Dendritic cell treated with granulocyte-macrophage colony-stimulating factor and Interleukin-4, amounts not matched to agents 40 ng/mL and 50 ng/mL, for 4 days (primary cell): ENCODE measurements at regions of chr17 and their contacts with region 1.

Region 1: GRCh38 chr17:4696437-4696805 is 7.5 kb downstream of the PELP1 start:
- H3K4me3 Mint-ChIP-seq: no peak overlapping the region
- H3K27ac Mint-ChIP-seq: peak overlapping the region; percentile 87
- H3K4me1 Mint-ChIP-seq: peaks cover 42% of the 10 kb centered on the region
- H3K27me3 Mint-ChIP-seq: no peaks in the 10 kb centered on the region

Region 2: GRCh38 chr17:4420692-4421131 is 275.7 kb before region 1 on chr17:
- intact Hi-C with region 1: loop called (anchors 5 kb)
- H3K4me3 Mint-ChIP-seq: no peak overlapping the region
- H3K27ac Mint-ChIP-seq: no peak overlapping the region
- H3K4me1 Mint-ChIP-seq: peaks cover 21% of the 10 kb centered on the region
- H3K27me3 Mint-ChIP-seq: peaks cover 6% of the 10 kb centered on the region

Region 3: GRCh38 chr17:4565209-4566141 is 130.9 kb before region 1 on chr17:
- intact Hi-C with region 1: loop called (anchors 1 kb)
- H3K4me3 Mint-ChIP-seq: no peak overlapping the region
- H3K27ac Mint-ChIP-seq: no peak overlapping the region
- H3K4me1 Mint-ChIP-seq: peaks cover 30% of the 10 kb centered on the region
- H3K27me3 Mint-ChIP-seq: peaks cover 12% of the 10 kb centered on the region

Region 4: GRCh38 chr17:4635823-4636375 is 60.5 kb before region 1 on chr17:
- intact Hi-C with region 1: loop called (anchors 2 kb)
- H3K4me3 Mint-ChIP-seq: peak overlapping the region; percentile 100
- H3K27ac Mint-ChIP-seq: peak overlapping the region; percentile 88
- H3K4me1 Mint-ChIP-seq: peaks cover 80% of the 10 kb centered on the region
- H3K27me3 Mint-ChIP-seq: no peaks in the 10 kb centered on the region

Region 5: DNA sequence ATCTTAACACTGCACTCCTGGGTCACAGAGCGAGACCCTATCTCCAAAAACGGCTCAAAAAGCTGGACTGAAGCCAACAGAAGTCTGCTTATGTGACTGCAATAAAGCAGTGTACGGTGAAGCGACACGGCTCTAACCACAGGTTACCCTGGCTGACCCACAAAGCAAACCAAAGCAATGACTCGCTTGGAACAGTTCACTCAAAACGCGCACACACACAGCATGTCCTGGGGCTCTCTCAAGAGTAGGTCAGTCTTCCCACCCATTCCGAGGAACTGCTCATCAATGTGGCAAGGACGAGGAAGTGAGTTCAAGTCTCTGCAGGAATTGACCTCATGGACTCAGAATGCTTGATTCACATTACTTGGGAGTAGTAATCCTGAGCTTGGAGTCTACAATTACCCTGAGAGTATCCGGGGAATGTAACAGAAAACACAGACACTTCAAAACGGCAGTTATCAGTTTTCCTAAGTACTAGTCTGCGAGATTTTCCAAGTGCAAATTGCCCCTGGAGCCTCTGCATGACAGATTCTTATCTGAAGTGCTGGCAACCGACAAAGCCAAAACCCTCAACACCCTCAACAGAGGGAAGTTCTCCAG is 17.9 kb before region 1 on chr17:
- intact Hi-C with region 1: loop called (anchors 1 kb)
- H3K4me3 Mint-ChIP-seq: peak overlapping the region; percentile 59
- H3K27ac Mint-ChIP-seq: peak overlapping the region; percentile 91
- H3K4me1 Mint-ChIP-seq: peaks cover 92% of the 10 kb centered on the region
- H3K27me3 Mint-ChIP-seq: no peaks in the 10 kb centered on the region

Region 6: DNA sequence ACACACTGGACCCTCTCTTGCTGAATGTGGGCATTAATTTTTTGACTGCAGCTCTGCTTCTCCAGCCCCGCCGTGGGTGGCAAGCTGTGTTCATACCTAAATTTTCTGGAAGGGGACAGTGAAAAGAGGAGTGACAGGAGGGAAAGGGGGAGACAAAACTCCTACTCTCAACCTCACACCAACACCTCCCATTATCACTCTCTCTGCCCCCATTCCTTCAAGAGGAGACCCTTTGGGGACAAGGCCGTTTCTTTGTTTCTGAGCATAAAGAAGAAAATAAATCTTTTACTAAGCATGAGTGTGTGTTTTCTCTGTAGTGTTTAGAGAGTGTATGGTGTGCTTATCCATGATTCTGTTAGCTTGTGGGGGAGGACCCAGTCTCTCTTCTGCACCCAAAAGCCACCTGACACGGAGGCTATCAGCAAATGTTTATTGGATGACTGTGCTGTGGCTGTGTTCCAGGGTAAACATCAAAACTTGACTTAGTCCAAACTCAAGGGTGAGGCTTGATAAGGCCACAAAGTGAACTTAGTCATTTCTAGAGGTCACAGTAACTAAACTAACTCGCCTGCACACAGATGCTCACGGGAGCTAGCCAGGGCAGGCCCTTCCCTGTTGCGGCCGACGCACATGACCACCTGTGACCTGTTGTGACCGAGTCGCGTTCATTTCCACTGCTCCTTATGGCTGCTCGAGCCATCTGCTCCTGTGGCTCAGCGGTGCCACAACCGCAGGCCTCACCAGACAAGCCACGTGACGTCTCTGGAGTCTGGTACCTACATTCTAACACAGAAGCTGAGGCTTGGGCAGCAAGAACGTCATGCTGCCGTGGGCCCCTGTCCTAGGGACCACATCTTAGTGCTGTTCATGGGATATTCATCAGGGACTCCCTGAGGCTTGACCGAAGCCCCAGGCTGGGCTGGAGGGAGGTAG is 25.0 kb after region 1 on chr17:
- intact Hi-C with region 1: no loop called
- H3K4me3 Mint-ChIP-seq: no peak overlapping the region
- H3K27ac Mint-ChIP-seq: peak overlapping the region; percentile 72
- H3K4me1 Mint-ChIP-seq: peaks cover 79% of the 10 kb centered on the region
- H3K27me3 Mint-ChIP-seq: no peaks in the 10 kb centered on the region